ENCODE measurements at regions of chr1 and their contacts with region 1.

Region 1: DNA sequence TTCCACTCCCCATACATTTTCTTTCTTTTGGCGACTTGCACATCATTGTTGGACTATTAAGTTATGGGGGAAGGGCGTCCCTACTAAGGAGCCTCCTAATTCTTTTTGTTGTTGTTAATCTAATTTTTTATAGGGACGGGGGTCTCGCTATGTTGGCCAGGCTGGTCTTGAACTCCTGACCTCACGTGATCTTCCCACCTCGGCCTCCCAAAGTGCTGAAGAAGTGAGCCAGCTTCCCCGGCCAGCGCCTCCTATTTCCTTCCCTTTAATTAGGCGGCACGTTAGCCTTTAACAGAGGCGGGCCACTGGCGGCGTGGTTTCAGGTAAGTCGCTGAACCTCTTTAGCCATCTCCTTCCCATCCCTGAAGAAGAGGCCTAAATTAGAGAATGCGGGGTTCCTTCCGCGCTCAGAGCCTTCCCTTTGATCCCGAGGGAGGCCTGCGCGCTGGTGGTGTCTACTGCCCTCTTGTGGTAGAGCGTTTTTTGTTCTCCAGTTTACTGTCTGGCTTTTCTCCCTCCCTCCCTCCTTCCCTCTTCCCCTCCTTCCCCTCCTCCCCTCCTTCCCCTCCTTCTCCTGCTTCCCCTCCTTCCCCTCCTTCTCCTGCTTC is 38.1 kb downstream of the TNFRSF9 start:
- DNase-seq: no peak
- H3K4me3 ChIP-seq: peak overlapping the region; percentile 21 to 50 (median 34)
- H3K27ac ChIP-seq: no peak overlapping the region
- H3K4me1 ChIP-seq: peaks cover 0 to 6% (median 5%) of the 10 kb centered on the region in 4 donors
- H3K27me3 ChIP-seq: no peaks in the 10 kb centered on the region
- CTCF ChIP-seq: peak; percentile 62 to 72 (median 65)
- EP300 ChIP-seq: no peak
- POLR2A ChIP-seq: no peak

Region 2: DNA sequence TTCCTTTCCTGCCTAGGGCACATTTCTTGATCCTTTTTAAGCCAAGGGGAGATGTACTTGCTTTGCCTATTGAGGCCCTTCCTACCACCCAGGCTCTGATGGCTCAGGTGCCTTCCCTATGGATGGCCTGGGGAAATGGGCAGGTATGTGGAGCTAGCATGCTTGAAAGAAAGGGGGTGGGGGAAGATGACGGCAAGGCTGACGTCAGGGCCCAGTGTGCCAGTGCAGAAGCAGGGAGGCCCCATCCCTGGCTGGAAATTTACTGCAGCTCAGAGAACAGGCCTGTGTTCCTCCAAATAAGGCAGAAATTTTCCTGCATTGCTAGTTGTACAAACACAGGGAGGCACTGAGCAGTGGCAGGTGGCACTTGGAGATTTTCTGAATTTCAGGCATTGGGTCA is 584.7 kb before region 1 on chr1:
- intact Hi-C with region 1: no loop called
- DNase-seq: peak; percentile 55
- H3K4me3 ChIP-seq: no peak overlapping the region
- H3K27ac ChIP-seq: no peak overlapping the region
- H3K4me1 ChIP-seq: no peaks in the 10 kb centered on the region
- H3K27me3 ChIP-seq: no peaks in the 10 kb centered on the region
- CTCF ChIP-seq: no peak
- EP300 ChIP-seq: no peak
- POLR2A ChIP-seq: no peak

Region 3: GRCh38 chr1:7808253-7808844 is 94.2 kb before region 1 on chr1:
- intact Hi-C with region 1: loop called (anchors 5 kb)
- DNase-seq: no peak
- H3K4me3 ChIP-seq: no peak overlapping the region
- H3K27ac ChIP-seq: no peak overlapping the region
- H3K4me1 ChIP-seq: no peaks in the 10 kb centered on the region
- H3K27me3 ChIP-seq: no peaks in the 10 kb centered on the region
- CTCF ChIP-seq: peak; percentile 37 to 50 (median 42)
- EP300 ChIP-seq: no peak
- POLR2A ChIP-seq: no peak

Region 4: GRCh38 chr1:7869136-7869905 is 33.3 kb before region 1 on chr1:
- intact Hi-C with region 1: no loop called
- DNase-seq: no peak
- H3K4me3 ChIP-seq: no peak overlapping the region
- H3K27ac ChIP-seq: no peak overlapping the region
- H3K4me1 ChIP-seq: no peaks in the 10 kb centered on the region
- H3K27me3 ChIP-seq: peaks cover 0 to 6% (median 0%) of the 10 kb centered on the region in 4 donors
- CTCF ChIP-seq: no peak
- EP300 ChIP-seq: no peak
- POLR2A ChIP-seq: no peak

Region 5: GRCh38 chr1:8097077-8097799 is 194.7 kb after region 1 on chr1:
- intact Hi-C with region 1: no loop called
- DNase-seq: no peak
- H3K4me3 ChIP-seq: no peak overlapping the region
- H3K27ac ChIP-seq: peak overlapping the region; percentile 67 to 82 (median 78)
- H3K4me1 ChIP-seq: peaks cover 15 to 33% (median 22%) of the 10 kb centered on the region in 4 donors
- H3K27me3 ChIP-seq: no peaks in the 10 kb centered on the region
- CTCF ChIP-seq: no peak
- EP300 ChIP-seq: no peak
- POLR2A ChIP-seq: no peak

Measured in esophagus muscularis mucosa (tissue), 4 donors.